Common myeloid progenitor, CD34-positive (primary cell): ENCODE measurements at regions of chr2 and their contacts with region 1.

Region 1: GRCh38 chr2:66477135-66477842 is 42.4 kb downstream of the MEIS1 start:
- DNase-seq: peak; percentile 35 to 78 (median 63)
- H3K4me3 ChIP-seq: peak overlapping the region in 3 of 7 experiments; percentile 19 to 37 (median 31)
- H3K27ac ChIP-seq: peak overlapping the region; percentile 51 to 71
- H3K4me1 ChIP-seq: peaks cover 14 to 76% (median 64%) of the 10 kb centered on the region in 4 experiments
- H3K27me3 ChIP-seq: no peaks in the 10 kb centered on the region

Region 2: GRCh38 chr2:66461664-66462500 is 15.4 kb before region 1 on chr2:
- CTCF ChIA-PET with region 1: interaction called, 19 read pairs
- POLR2A ChIA-PET with region 1: no interaction called
- DNase-seq: no peak
- H3K4me3 ChIP-seq: no peak overlapping the region
- H3K27ac ChIP-seq: no peak overlapping the region
- H3K4me1 ChIP-seq: peaks cover 0 to 25% (median under 1%) of the 10 kb centered on the region in 4 experiments
- H3K27me3 ChIP-seq: no peaks in the 10 kb centered on the region